ENCODE measurements at regions of chr5 and their contacts with region 1.

Region 1: GRCh38 chr5:90386099-90386710 is 23.4 kb downstream of the CETN3 start:
- DNase-seq: peak; percentile 5
- H3K4me3 ChIP-seq: no peak overlapping the region
- H3K27ac ChIP-seq: no peak overlapping the region
- H3K4me1 ChIP-seq: no peaks in the 10 kb centered on the region
- H3K27me3 ChIP-seq: no peaks in the 10 kb centered on the region; the same call in 1 of the 2 replicates
- CTCF ChIP-seq: peak; percentile 66
- EP300 ChIP-seq: no peak
- RAD21 ChIP-seq: peak; percentile 77

Region 2: GRCh38 chr5:90264689-90265544 is 121.3 kb before region 1 on chr5:
- CTCF ChIA-PET with region 1: interaction called, 26 read pairs
- POLR2A ChIA-PET with region 1: no interaction called
- DNase-seq: peak; percentile 31
- H3K4me3 ChIP-seq: peak overlapping the region in 1 of 2 experiments; percentile 28; a peak in 1 of 4 replicates
- H3K27ac ChIP-seq: peak overlapping the region in 1 of 2 experiments; percentile 51; a peak in 1 of 4 replicates
- H3K4me1 ChIP-seq: peaks cover 0 to 2% of the 10 kb centered on the region in 2 experiments; a peak in 2 of 4 replicates
- H3K27me3 ChIP-seq: no peaks in the 10 kb centered on the region
- CTCF ChIP-seq: peak; percentile 98
- EP300 ChIP-seq: peak in 1 of 2 experiments; percentile 59; a peak in 2 of 4 replicates
- RAD21 ChIP-seq: peak; percentile 99

Region 3: DNA sequence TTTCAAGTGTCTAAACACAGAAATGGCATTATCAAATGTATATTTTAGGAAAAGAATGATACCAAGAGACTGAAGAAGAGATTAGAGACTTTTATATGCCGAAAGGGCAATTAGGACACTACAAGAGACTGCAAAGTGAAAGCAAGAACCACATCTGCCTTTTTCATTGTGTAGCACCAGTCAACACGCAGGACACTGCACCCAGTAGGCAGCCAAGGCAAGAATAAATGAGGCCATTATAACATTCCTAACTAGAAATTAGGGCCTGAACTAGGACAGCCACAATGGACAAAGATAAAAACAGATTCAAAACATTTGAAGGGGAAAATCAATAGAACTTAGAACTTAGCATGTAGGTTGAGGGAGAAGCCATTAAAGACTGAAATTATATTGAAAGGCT is 12.5 kb after region 1 on chr5:
- CTCF ChIA-PET with region 1: interaction called, 13 read pairs
- POLR2A ChIA-PET with region 1: no interaction called
- DNase-seq: no peak
- H3K4me3 ChIP-seq: no peak overlapping the region
- H3K27ac ChIP-seq: no peak overlapping the region
- H3K4me1 ChIP-seq: no peaks in the 10 kb centered on the region
- H3K27me3 ChIP-seq: no peaks in the 10 kb centered on the region
- CTCF ChIP-seq: no peak
- EP300 ChIP-seq: no peak
- RAD21 ChIP-seq: no peak